K562 (cell line): ENCODE measurements at regions of chr3 and their contacts with region 1.

Region 1: GRCh38 chr3:156826144-156826895 is at the start of gene LEKR1:
- DNase-seq: peak; percentile 84 to 91 (median 86)
- ATAC-seq: peak; percentile 90
- H3K4me3 ChIP-seq: peak within 1 kb of the TSS; percentile 52
- H3K27ac ChIP-seq: peak within 1 kb of the TSS; percentile 97
- H3K4me1 ChIP-seq: peaks cover 13 to 18% of the 10 kb centered on the region in 2 experiments; a peak in 4 of 5 replicates
- H3K27me3 ChIP-seq: no peaks in the 10 kb centered on the region
- CTCF ChIP-seq: no peak
- EP300 ChIP-seq: peak; percentile 9; the same call in 1 of the 2 replicates
- POLR2A ChIP-seq: peak; percentile 96
- RAD21 ChIP-seq: no peak
- polyA plus RNA-seq, gene LEKR1: 1.3 to 1.8 TPM

Region 2: DNA sequence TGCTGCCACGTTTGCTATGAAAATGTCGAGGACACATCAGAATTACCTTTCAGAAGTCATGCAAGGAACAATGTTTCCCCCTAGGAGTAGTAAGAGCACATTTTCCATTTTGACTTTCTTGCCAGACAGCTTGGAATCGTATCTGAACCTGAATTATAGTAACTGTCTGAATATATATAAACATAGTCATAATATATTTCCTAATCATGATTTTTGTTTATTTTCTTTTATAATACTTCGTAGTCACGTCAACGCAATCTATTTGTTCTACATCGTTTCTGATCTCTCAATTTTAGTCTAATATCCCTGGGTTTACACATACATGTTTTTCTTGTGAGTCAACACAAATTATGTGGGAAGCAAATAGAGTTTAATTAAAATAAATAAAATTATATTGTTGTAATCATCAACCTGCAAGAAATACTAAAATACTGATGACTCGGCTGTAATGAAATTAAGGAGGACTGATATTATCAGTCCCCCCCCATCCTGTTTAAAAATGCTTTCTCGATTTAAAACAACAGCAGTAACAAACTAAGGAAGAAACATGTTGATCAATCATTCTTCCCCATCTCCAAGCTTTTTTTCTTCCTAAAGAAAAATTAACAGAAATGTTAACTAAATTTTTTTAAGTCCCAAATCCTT is 1667.8 kb before region 1 on chr3:
- CTCF ChIA-PET with region 1: no interaction called
- POLR2A ChIA-PET with region 1: no interaction called
- in situ Hi-C with region 1: no loop called
- intact Hi-C with region 1: no loop called
- DNase-seq: no peak
- ATAC-seq: no peak
- H3K4me3 ChIP-seq: no peak overlapping the region
- H3K27ac ChIP-seq: no peak overlapping the region
- H3K4me1 ChIP-seq: peaks cover 0 to 3% of the 10 kb centered on the region in 2 experiments; a peak in 2 of 5 replicates
- H3K27me3 ChIP-seq: no peaks in the 10 kb centered on the region
- CTCF ChIP-seq: no peak
- EP300 ChIP-seq: no peak
- POLR2A ChIP-seq: no peak
- RAD21 ChIP-seq: no peak

Region 3: DNA sequence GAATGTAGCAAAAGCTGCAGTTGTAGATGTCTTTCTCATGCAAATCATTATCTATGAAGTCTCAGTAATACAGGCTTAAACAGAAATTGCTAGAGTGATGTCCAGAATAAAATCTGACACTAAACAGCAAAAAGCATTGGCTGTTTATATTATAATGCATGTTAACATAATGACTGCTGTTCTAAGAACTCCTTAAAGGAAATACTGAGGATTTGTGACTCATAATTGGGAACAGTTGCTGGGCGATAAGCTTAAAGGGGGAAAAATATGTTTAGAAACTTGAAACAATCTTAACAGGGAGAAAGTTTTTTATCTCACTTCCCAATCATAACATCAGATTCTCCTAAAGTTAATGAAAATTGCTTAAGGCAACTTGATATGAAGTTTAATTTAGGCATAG is 134.4 kb before region 1 on chr3:
- CTCF ChIA-PET with region 1: no interaction called
- POLR2A ChIA-PET with region 1: no interaction called
- in situ Hi-C with region 1: no loop called
- intact Hi-C with region 1: loop called (anchors 5 kb)
- DNase-seq: no peak
- ATAC-seq: no peak
- H3K4me3 ChIP-seq: no peak overlapping the region
- H3K27ac ChIP-seq: no peak overlapping the region
- H3K4me1 ChIP-seq: peaks cover 0 to 39% of the 10 kb centered on the region in 2 experiments; a peak in 3 of 5 replicates
- H3K27me3 ChIP-seq: no peaks in the 10 kb centered on the region
- CTCF ChIP-seq: no peak
- EP300 ChIP-seq: no peak
- POLR2A ChIP-seq: no peak
- RAD21 ChIP-seq: no peak

Region 4: GRCh38 chr3:156743859-156744258 is 82.5 kb before region 1 on chr3:
- CTCF ChIA-PET with region 1: no interaction called
- POLR2A ChIA-PET with region 1: no interaction called
- in situ Hi-C with region 1: no loop called
- intact Hi-C with region 1: no loop called
- DNase-seq: no peak
- ATAC-seq: no peak
- H3K4me3 ChIP-seq: no peak overlapping the region
- H3K27ac ChIP-seq: no peak overlapping the region
- H3K4me1 ChIP-seq: 0 out of 5 replicates have a peak, but pooled peaks cover 0 to 4% of the 10 kb centered on the region in 2 experiments
- H3K27me3 ChIP-seq: no peaks in the 10 kb centered on the region
- CTCF ChIP-seq: no peak
- EP300 ChIP-seq: no peak
- POLR2A ChIP-seq: no peak
- RAD21 ChIP-seq: peak in 1 of 2 experiments; percentile 11; a peak in 1 of 4 replicates

Region 5: DNA sequence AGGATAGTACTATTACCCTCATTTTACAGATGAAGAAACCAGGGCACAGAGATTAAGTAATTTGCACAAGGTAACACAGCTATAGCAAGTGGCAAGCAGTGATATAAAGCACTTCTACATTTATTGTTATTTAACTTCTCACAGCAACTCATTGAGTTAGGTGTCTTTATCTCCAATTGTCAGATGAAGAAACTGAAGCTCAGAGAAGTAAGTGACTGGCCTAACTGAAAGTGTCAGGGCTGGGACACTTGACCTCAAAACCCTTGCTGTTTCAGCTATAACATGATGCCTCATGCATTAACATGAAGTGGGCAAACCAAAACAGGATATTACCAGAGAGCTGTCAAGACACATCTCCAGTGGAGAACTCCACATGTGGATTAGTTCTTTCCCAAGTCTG is 66.0 kb before region 1 on chr3:
- CTCF ChIA-PET with region 1: no interaction called
- POLR2A ChIA-PET with region 1: no interaction called
- in situ Hi-C with region 1: no loop called
- intact Hi-C with region 1: loop called (anchors 5 kb)
- DNase-seq: peak in 1 of 4 experiments; percentile 53
- ATAC-seq: peak; percentile 69
- H3K4me3 ChIP-seq: no peak overlapping the region
- H3K27ac ChIP-seq: peak overlapping the region; percentile 27; the same call in 1 of the 3 replicates
- H3K4me1 ChIP-seq: peaks cover 0 to 17% of the 10 kb centered on the region in 2 experiments; a peak in 3 of 5 replicates
- H3K27me3 ChIP-seq: no peaks in the 10 kb centered on the region
- CTCF ChIP-seq: no peak
- EP300 ChIP-seq: peak; percentile 24; the same call in 1 of the 2 replicates
- POLR2A ChIP-seq: no peak
- RAD21 ChIP-seq: no peak

Region 6: DNA sequence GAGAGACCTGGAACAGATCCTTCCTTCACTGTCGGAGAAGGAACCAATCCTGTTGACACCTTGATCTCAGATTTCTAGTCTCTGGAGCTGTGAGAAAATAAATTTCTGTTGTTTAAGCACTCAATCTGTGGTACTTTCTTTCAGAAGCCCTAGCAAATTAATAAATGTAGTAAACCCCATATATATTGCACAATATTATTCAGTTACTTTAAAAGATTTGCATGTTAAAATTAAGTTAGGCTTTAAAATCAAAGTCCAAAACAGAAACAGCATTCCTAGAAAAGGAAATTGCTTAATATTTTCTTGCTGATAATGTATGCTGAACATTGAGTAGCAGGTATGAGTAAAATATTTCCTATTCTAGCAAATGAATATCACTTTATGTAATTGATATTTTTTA is 113.0 kb after region 1 on chr3:
- CTCF ChIA-PET with region 1: no interaction called
- POLR2A ChIA-PET with region 1: no interaction called
- in situ Hi-C with region 1: no loop called
- intact Hi-C with region 1: no loop called
- DNase-seq: no peak
- ATAC-seq: no peak
- H3K4me3 ChIP-seq: no peak overlapping the region
- H3K27ac ChIP-seq: no peak overlapping the region
- H3K4me1 ChIP-seq: no peaks in the 10 kb centered on the region
- H3K27me3 ChIP-seq: no peaks in the 10 kb centered on the region
- CTCF ChIP-seq: no peak
- EP300 ChIP-seq: no peak
- POLR2A ChIP-seq: no peak
- RAD21 ChIP-seq: no peak